Right lobe of liver (tissue), 6 donors: ENCODE measurements at regions of chrX and their contacts with region 1.

Region 1: DNA sequence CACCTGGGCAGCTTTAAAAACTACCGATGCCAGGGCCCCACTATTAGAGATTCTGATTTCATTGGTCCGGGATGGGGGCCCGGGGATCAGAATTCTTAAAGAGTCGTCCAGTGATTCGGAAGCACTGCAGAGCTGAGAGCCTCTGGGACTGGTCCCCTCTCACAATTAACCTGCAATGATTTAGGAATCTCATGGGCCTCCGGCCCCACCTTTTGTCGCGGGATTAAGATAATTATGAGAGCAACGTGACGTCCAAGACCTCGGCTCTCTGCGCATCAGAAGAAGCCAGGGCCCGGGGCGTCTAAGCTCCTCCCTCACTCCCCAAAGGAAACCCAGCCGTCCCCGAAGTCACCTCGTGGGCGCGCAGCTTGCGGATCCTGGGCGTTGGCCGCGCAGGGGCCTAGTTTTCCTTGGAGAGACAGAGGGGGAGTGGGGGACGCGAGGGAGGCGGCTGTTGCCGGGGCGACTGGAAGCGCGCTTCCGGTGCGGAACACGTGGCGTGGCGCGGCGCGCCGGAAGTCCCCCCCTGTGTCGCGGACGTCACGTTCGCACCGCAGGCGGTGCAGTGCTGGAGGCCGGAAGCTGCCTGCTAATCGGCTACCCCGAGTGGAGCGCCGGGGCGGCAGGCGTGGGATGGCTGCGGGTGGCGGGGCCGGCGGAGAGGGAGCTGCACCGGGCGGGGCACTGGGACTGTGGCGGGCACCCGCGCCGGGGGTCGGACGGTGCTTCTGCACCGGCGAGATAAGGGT is at the start of gene GEMIN8:
- DNase-seq: peak; percentile 86 to 92 (median 91)
- ATAC-seq: peak; percentile 97 to 100 (median 98)
- H3K4me3 ChIP-seq: peak within 1 kb of the TSS; percentile 65 to 75 (median 70)
- H3K27ac ChIP-seq: peak within 1 kb of the TSS; percentile 45 to 65 (median 61)
- H3K4me1 ChIP-seq: no peaks in the 10 kb centered on the region
- H3K27me3 ChIP-seq: no peaks in the 10 kb centered on the region
- CTCF ChIP-seq: no peak
- POLR2A ChIP-seq: peak; percentile 81
- total RNA-seq, gene GEMIN8: 8.0 to 14.8 (median 10.1) TPM

Region 2: GRCh38 chrX:13653022-13653693 is 376.4 kb before region 1 on chrX and contains the start of gene TCEANC:
- intact Hi-C with region 1: loop called (anchors 5 to 10 kb)
- DNase-seq: peak; percentile 94 to 98 (median 97)
- ATAC-seq: peak; percentile 97 to 99 (median 98)
- H3K4me3 ChIP-seq: peak within 1 kb of the TSS; percentile 53 to 74 (median 70)
- H3K27ac ChIP-seq: peak within 1 kb of the TSS; percentile 73 to 83 (median 76)
- H3K4me1 ChIP-seq: peaks cover 0 to 16% (median 8%) of the 10 kb centered on the region in 4 donors
- H3K27me3 ChIP-seq: no peaks in the 10 kb centered on the region
- CTCF ChIP-seq: no peak
- POLR2A ChIP-seq: peak; percentile 84
- total RNA-seq, gene TCEANC: 3.4 to 4.8 (median 4.1) TPM

Region 3: GRCh38 chrX:13658602-13659001 is 371.0 kb before region 1 on chrX:
- intact Hi-C with region 1: loop called (anchors 5 to 10 kb)
- DNase-seq: no peak
- ATAC-seq: peak; percentile 71 to 87 (median 80)
- H3K4me3 ChIP-seq: no peak overlapping the region
- H3K27ac ChIP-seq: peak overlapping the region in 2 of 3 donors; percentile 24 to 44
- H3K4me1 ChIP-seq: peaks cover 0 to 14% (median 3%) of the 10 kb centered on the region in 4 donors
- H3K27me3 ChIP-seq: no peaks in the 10 kb centered on the region
- CTCF ChIP-seq: peak; percentile 70 to 83 (median 80)
- POLR2A ChIP-seq: no peak

Region 4: DNA sequence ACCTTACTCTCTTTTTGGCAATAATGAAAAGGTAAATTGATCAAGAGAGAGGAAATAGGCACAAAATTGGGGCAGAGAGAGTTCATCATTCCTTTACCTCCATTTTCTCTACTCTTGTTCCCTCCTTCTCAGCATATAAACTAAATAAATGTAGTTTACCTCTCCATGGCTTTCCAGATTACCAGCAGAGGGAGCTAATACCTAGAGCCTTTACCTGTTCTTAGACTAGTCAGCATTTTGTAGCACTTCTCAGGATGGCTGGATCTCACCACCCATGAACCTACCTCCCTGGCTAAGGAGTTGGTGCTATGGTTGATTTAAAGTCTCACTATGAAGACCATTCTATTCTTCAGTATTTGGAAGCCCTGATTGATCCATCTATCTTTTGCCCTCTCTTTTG is 279.4 kb before region 1 on chrX:
- intact Hi-C with region 1: loop called in 1 of 2 experiments (anchors 5 kb)
- DNase-seq: no peak
- ATAC-seq: peak; percentile 64 to 74 (median 66)
- H3K4me3 ChIP-seq: no peak overlapping the region
- H3K27ac ChIP-seq: no peak overlapping the region
- H3K4me1 ChIP-seq: no peaks in the 10 kb centered on the region
- H3K27me3 ChIP-seq: no peaks in the 10 kb centered on the region
- CTCF ChIP-seq: peak; percentile 52 to 72 (median 65)
- POLR2A ChIP-seq: no peak

Region 5: GRCh38 chrX:13940671-13941070 is 88.9 kb before region 1 on chrX:
- intact Hi-C with region 1: no loop called
- DNase-seq: no peak
- ATAC-seq: no peak
- H3K4me3 ChIP-seq: no peak overlapping the region
- H3K27ac ChIP-seq: no peak overlapping the region
- H3K4me1 ChIP-seq: no peaks in the 10 kb centered on the region
- H3K27me3 ChIP-seq: peaks cover 0 to 25% of the 10 kb centered on the region in 2 donors
- CTCF ChIP-seq: no peak
- POLR2A ChIP-seq: no peak